IMR-90 (cell line): ENCODE measurements at regions of chr17 and their contacts with region 1.

Region 1: GRCh38 chr17:63425482-63425881 is 20.6 kb downstream of the CYB561 start:
- DNase-seq: peak; percentile 84
- ATAC-seq: peak; percentile 96
- H3K4me3 ChIP-seq: no peak overlapping the region
- H3K27ac ChIP-seq: no peak overlapping the region
- H3K4me1 ChIP-seq: peaks cover 6% of the 10 kb centered on the region; the same call in 1 of the 2 replicates
- H3K27me3 ChIP-seq: no peaks in the 10 kb centered on the region
- CTCF ChIP-seq: peak; percentile 96
- POLR2A ChIP-seq: peak; percentile 43; the same call in 1 of the 2 replicates
- RAD21 ChIP-seq: peak; percentile 99

Region 2: GRCh38 chr17:63316100-63316499 is 109.4 kb before region 1 on chr17:
- CTCF ChIA-PET with region 1: no interaction called
- POLR2A ChIA-PET with region 1: no interaction called
- dilution Hi-C with region 1: no loop called
- in situ Hi-C with region 1: no loop called
- intact Hi-C with region 1: no loop called
- DNase-seq: peak; percentile 19
- ATAC-seq: peak; percentile 69
- H3K4me3 ChIP-seq: no peak overlapping the region
- H3K27ac ChIP-seq: no peak overlapping the region
- H3K4me1 ChIP-seq: peaks cover 5% of the 10 kb centered on the region; the same call in 1 of the 2 replicates
- H3K27me3 ChIP-seq: no peaks in the 10 kb centered on the region
- CTCF ChIP-seq: no peak
- POLR2A ChIP-seq: no peak
- RAD21 ChIP-seq: no peak

Region 3: DNA sequence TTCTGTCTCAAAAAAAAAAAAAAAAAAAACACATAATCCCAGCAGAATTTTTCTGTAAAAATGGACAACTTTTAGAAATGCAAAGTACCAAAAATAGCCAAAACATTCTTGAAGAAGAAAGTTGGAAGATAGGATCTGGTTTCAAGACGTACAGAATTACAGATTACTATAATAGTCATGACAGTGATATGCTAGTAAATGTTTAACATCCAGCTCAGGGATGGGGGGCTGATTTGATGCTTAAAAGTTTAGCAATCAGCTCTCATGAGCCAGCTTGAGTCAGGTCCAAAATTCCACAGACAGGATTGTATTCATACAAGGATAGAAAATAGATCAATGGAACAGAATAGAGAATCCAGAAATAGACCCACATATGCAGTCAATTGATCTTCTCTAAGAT is 79.9 kb before region 1 on chr17:
- CTCF ChIA-PET with region 1: no interaction called
- POLR2A ChIA-PET with region 1: no interaction called
- dilution Hi-C with region 1: no loop called
- in situ Hi-C with region 1: no loop called
- intact Hi-C with region 1: no loop called
- DNase-seq: peak; percentile 80
- ATAC-seq: peak; percentile 18
- H3K4me3 ChIP-seq: no peak overlapping the region
- H3K27ac ChIP-seq: no peak overlapping the region
- H3K4me1 ChIP-seq: peaks cover 13% of the 10 kb centered on the region
- H3K27me3 ChIP-seq: no peaks in the 10 kb centered on the region
- CTCF ChIP-seq: no peak
- POLR2A ChIP-seq: no peak
- RAD21 ChIP-seq: no peak

Region 4: GRCh38 chr17:63435685-63436522 is 10.4 kb after region 1 on chr17:
- CTCF ChIA-PET with region 1: no interaction called
- POLR2A ChIA-PET with region 1: no interaction called
- dilution Hi-C with region 1: no loop called
- in situ Hi-C with region 1: no loop called
- intact Hi-C with region 1: no loop called
- DNase-seq: no peak
- ATAC-seq: no peak
- H3K4me3 ChIP-seq: no peak overlapping the region
- H3K27ac ChIP-seq: no peak overlapping the region
- H3K4me1 ChIP-seq: peaks cover 28% of the 10 kb centered on the region
- H3K27me3 ChIP-seq: no peaks in the 10 kb centered on the region
- CTCF ChIP-seq: no peak
- POLR2A ChIP-seq: no peak
- RAD21 ChIP-seq: no peak

Region 5: DNA sequence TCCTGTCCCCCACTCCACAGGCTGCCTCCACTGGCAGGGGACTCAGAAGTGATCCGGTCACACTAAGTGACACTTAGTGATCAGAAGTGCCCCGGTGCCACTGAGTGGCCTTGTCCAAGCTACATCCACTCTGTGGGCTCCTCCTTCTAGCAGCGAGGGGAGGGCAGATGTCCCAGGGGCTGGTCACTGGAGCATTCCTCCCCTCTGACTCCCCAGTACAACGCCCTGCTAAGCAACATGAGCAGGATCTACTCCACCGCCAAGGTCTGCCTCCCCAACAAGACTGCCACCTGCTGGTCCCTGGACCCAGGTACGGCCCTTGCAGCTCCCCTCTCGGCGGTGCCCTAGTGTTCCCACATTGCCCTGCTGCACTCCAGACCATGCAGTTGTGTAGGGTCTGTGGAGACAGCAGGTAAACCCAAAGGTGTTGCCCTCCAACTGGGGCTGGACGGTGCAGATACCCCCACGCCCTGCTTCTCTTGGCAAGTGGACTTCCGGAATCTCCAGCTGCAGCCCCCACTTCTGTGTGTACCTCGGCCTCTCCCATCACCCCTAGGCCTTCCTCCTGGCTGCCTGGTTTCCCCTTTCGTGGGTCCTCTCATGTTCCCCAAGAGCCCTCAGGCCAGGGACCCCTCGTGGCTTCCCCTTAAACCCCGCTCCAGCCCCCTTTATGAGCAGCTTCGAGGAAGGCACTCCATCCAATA is 53.5 kb after region 1 on chr17:
- CTCF ChIA-PET with region 1: interaction called, 24 read pairs
- POLR2A ChIA-PET with region 1: no interaction called
- dilution Hi-C with region 1: no loop called
- in situ Hi-C with region 1: no loop called
- intact Hi-C with region 1: loop called (anchors 1 kb)
- DNase-seq: peak; percentile 92
- ATAC-seq: peak; percentile 87
- H3K4me3 ChIP-seq: no peak overlapping the region
- H3K27ac ChIP-seq: no peak overlapping the region
- H3K4me1 ChIP-seq: peaks cover 11% of the 10 kb centered on the region
- H3K27me3 ChIP-seq: peaks cover 11% of the 10 kb centered on the region
- CTCF ChIP-seq: peak; percentile 89
- POLR2A ChIP-seq: no peak
- RAD21 ChIP-seq: peak; percentile 87

Region 6: DNA sequence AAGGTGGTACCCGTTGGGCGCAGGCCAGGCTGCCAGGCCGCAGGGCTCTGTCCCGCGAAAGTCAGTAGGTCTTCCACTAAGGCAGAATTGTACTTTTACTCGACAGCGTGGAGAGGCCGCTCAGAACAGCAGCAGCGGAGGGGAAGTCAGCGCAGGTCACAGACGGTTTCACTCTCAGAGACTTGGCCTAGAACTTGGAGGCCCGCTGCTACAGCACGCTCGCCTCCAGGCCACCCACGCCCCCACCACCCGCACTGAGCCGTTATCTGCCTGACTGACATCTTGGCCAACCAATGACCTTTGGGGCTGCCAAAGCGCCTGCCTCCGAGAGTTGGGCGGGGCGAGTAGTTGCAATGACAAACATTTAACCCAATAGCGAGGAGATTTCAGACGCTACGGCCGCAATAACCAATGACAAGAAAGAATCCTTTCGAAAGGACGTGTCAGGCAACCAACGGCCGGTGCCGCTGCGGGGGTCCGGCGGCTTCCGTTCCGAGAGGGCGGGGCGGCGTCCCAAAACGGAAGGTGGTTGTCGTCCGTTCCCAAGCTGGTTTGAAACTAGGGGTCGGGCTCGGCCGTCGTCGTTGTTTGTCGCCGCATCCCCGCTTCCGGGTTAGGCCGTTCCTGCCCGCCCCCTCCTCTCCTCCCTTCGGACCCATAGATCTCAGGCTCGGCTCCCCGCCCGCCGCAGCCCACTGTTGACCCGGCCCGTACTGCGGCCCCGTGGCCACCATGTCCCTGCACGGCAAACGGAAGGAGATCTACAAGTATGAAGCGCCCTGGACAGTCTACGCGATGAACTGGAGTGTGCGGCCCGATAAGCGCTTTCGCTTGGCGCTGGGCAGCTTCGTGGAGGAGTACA is 124.7 kb after region 1 on chr17 and contains the start of gene DCAF7:
- CTCF ChIA-PET with region 1: interaction called, 3 read pairs
- POLR2A ChIA-PET with region 1: interaction called, 3 read pairs
- dilution Hi-C with region 1: no loop called
- in situ Hi-C with region 1: no loop called
- intact Hi-C with region 1: loop called (anchors 2 kb)
- DNase-seq: peak; percentile 100
- ATAC-seq: peak; percentile 96
- H3K4me3 ChIP-seq: peak within 1 kb of the TSS; percentile 80
- H3K27ac ChIP-seq: peak within 1 kb of the TSS; percentile 76
- H3K4me1 ChIP-seq: peaks cover 3% of the 10 kb centered on the region
- H3K27me3 ChIP-seq: no peaks in the 10 kb centered on the region
- CTCF ChIP-seq: peak; percentile 2; the same call in 1 of the 2 replicates
- POLR2A ChIP-seq: peak; percentile 64; the same call in 1 of the 2 replicates
- RAD21 ChIP-seq: no peak
- total RNA-seq, gene DCAF7: 31.4 and 40.9 TPM in 2 replicates

Region 7: DNA sequence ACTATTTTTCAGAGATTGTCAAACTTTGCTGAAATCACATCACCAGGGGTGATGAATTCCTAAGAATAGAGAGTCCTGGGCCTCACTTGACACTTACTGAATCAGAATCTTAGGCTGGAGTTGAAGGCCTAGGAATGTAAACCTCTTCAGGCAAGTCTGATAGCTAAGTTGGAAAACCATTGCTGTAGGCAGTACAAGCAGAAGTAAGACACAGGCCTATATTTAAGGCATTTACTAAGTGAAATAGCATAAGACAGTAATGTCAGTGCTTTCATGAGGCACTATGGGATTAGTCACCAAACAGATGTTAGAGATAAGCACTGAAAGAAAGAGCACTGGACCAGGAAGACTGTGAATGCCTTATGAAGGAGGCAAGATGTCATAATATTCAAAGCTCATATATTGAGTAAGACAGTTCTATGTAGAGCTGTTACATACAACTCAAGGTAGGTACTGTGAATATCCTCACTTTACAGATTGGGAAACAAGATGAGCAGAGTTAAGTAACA is 146.3 kb after region 1 on chr17:
- CTCF ChIA-PET with region 1: no interaction called
- POLR2A ChIA-PET with region 1: no interaction called
- dilution Hi-C with region 1: no loop called
- in situ Hi-C with region 1: no loop called
- intact Hi-C with region 1: loop called (anchors 2 kb)
- DNase-seq: peak; percentile 93
- ATAC-seq: peak; percentile 93
- H3K4me3 ChIP-seq: no peak overlapping the region
- H3K27ac ChIP-seq: no peak overlapping the region; the same call in 1 of the 2 replicates
- H3K4me1 ChIP-seq: peaks cover 4% of the 10 kb centered on the region
- H3K27me3 ChIP-seq: no peaks in the 10 kb centered on the region
- CTCF ChIP-seq: no peak
- POLR2A ChIP-seq: no peak
- RAD21 ChIP-seq: no peak

Region 8: GRCh38 chr17:63611354-63611753 is 185.9 kb after region 1 on chr17:
- CTCF ChIA-PET with region 1: interaction called, 22 read pairs
- POLR2A ChIA-PET with region 1: no interaction called
- dilution Hi-C with region 1: no loop called
- in situ Hi-C with region 1: loop called (anchors 5 kb)
- intact Hi-C with region 1: loop called (anchors 1 kb)
- DNase-seq: no peak
- ATAC-seq: no peak
- H3K4me3 ChIP-seq: no peak overlapping the region
- H3K27ac ChIP-seq: no peak overlapping the region
- H3K4me1 ChIP-seq: no peaks in the 10 kb centered on the region
- H3K27me3 ChIP-seq: no peaks in the 10 kb centered on the region
- CTCF ChIP-seq: no peak
- POLR2A ChIP-seq: no peak
- RAD21 ChIP-seq: no peak

Region 9: DNA sequence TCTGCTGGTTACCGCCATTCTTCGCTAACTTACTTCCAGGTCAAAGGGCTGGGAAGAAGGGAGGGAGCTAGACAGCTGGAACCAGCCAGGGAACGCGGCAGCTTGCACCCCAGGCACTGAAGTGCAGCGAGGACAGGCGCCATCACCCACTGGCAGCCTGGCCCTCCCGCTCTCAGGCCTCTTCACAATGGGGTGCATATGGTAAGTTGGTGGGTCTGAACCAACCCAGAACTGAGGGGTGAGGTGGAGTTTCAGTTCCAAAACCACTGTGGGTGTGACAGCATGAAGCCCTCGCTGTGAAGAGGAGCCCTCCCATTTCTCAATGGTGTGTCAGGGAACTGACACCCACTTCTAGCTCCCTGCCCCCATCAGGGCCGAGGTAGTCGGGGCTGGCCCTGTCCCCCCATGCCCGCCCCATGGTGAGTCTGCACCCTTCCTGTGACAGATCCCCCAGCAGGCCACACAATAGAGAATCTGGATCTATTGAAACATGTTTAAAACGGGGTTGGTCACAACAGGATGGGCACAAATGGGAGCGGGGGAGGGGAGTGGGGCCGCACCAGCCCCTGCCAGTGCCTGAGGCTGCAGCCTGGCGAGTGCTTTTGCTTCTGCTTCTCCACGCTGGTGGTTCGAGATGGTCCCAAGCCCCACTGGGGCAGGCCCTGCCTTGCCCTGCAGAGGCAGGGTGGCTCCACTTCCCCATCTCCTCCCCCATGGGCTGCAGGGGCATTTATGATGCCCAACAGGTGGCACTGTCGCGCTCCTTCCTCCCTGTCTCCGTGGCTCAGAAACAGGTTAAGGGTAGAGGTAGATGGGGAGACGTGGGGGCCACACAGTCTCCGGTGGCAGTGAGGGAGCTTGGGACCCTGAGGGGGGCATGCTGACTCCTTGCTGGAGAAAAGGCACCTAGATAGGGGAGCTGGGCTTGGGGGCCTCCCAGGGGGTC is 272.1 kb after region 1 on chr17:
- CTCF ChIA-PET with region 1: no interaction called
- POLR2A ChIA-PET with region 1: no interaction called
- dilution Hi-C with region 1: no loop called
- in situ Hi-C with region 1: no loop called
- intact Hi-C with region 1: loop called (anchors 5 kb)
- DNase-seq: no peak
- ATAC-seq: no peak
- H3K4me3 ChIP-seq: no peak overlapping the region
- H3K27ac ChIP-seq: no peak overlapping the region
- H3K4me1 ChIP-seq: no peaks in the 10 kb centered on the region
- H3K27me3 ChIP-seq: no peaks in the 10 kb centered on the region
- CTCF ChIP-seq: peak; percentile 45
- POLR2A ChIP-seq: no peak
- RAD21 ChIP-seq: peak; percentile 33; the same call in 1 of the 2 replicates